Heart left ventricle (tissue), 16 donors: ENCODE measurements at regions of chr12 and their contacts with region 1.

Region 1: DNA sequence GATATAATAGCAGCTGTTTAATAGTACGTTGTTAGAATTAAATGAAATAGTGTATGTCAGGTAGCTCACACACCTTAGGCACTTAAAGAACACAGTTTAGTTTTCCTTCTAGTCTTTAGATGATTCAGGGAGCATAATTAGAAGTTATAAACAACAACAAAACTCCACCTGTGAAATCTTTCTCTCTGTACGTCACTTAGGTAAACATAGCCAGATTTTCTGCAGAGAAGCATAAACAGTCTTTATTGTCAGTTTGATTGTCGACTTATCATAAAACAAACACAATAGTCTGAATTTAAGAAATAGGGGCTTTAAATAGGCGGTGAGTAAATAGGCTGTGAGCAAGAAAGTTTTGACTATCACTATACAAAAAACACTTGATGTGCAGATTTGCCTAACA is 84.6 kb upstream of the PKP2 start:
- DNase-seq: no peak
- ATAC-seq: no peak
- H3K4me3 ChIP-seq: no peak overlapping the region
- H3K27ac ChIP-seq: no peak overlapping the region
- H3K4me1 ChIP-seq: no peaks in the 10 kb centered on the region
- H3K27me3 ChIP-seq: peaks cover 0 to 16% (median 0%) of the 10 kb centered on the region in 9 donors
- CTCF ChIP-seq: no peak
- POLR2A ChIP-seq: no peak

Region 2: DNA sequence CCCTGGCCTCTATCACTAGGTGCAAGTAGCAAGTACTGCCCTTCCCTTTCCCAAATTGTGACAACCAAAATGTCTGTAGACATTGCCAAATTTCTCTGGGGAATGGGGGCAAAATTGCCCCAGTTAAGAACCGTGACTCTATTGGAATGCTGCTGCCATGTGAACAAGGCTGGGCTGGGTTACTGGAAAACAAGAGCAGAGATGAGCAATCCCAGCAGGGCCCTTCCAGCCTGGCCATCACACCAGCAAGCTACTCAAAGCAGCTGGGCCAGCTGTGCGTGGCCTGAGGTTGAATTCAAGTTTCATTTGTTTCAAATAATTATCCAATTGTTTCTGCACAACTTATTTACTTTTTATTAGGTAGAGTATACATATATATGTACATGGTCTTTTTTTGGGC is 18.9 kb after region 1 on chr12:
- intact Hi-C with region 1: loop called in 1 of 10 experiments (anchors 2 kb)
- DNase-seq: no peak
- ATAC-seq: no peak
- H3K4me3 ChIP-seq: no peak overlapping the region
- H3K27ac ChIP-seq: no peak overlapping the region
- H3K4me1 ChIP-seq: no peaks in the 10 kb centered on the region
- H3K27me3 ChIP-seq: no peaks in the 10 kb centered on the region
- CTCF ChIP-seq: no peak
- POLR2A ChIP-seq: no peak